K562 (cell line): ENCODE measurements at regions of chr2 and their contacts with region 1.

Region 1: GRCh38 chr2:232365621-232366321 is 12.8 kb upstream of the ALPP start:
- DNase-seq: peak; percentile 21 to 44 (median 24)
- ATAC-seq: peak; percentile 94
- H3K4me3 ChIP-seq: no peak overlapping the region
- H3K27ac ChIP-seq: no peak overlapping the region
- H3K4me1 ChIP-seq: peaks cover 0 to 6% of the 10 kb centered on the region in 2 experiments; a peak in 1 of 5 replicates
- H3K27me3 ChIP-seq: peaks cover 0 to 13% of the 10 kb centered on the region in 2 experiments; a peak in 1 of 5 replicates
- CTCF ChIP-seq: peak; percentile 30 to 75 (median 51); a peak in 5 of 6 replicates
- EP300 ChIP-seq: no peak
- POLR2A ChIP-seq: no peak
- RAD21 ChIP-seq: peak in 1 of 2 experiments; percentile 49; a peak in 2 of 4 replicates

Region 2: DNA sequence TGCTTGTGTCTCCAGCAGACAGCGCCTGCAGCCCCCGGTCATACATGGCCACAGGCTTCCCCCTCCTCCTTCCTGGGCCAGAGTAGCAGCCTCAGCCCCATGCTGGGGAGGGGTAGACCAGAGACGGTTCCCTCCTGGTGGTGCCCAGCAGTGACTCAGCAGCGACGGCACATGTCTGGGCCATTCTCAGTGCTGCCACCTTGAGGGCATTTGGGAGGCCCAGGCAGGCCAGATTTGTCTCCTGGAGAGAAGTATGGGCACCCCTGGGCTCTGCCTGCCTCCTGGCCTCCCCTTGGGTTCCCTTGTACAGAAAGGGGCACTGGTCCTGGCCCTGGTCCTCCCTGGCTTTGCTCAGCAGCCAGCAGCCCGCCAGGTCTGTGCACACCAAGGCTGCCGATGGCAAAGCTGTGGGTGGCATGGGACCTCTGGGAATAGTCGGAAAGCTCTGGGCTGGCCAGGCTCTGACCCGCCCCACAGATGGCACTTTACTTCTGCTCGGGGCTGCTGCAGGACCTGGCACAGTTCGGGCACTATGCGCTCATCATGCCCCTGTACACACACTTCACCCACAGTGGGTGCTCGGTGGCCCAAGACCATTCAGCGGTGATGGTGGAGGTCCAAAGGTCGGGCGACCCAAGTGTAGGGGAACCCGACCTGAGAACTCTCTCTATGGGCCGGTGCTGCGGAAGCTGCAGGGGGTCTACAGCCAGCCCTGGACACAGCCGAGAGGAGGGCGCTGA is 78.8 kb after region 1 on chr2:
- CTCF ChIA-PET with region 1: no interaction called
- POLR2A ChIA-PET with region 1: no interaction called
- in situ Hi-C with region 1: no loop called
- intact Hi-C with region 1: loop called (anchors 5 kb)
- DNase-seq: peak; percentile 52 to 65 (median 60)
- ATAC-seq: peak; percentile 64
- H3K4me3 ChIP-seq: no peak overlapping the region
- H3K27ac ChIP-seq: no peak overlapping the region
- H3K4me1 ChIP-seq: peaks cover 0 to 12% of the 10 kb centered on the region in 2 experiments; a peak in 2 of 5 replicates
- H3K27me3 ChIP-seq: no peaks in the 10 kb centered on the region
- CTCF ChIP-seq: peak; percentile 54 to 60 (median 59)
- EP300 ChIP-seq: no peak
- POLR2A ChIP-seq: no peak
- RAD21 ChIP-seq: no peak